GM18951 (cell line): ENCODE measurements at regions of chr3 and their contacts with region 1.

Region 1: GRCh38 chr3:8970971-8971589 is 7.8 kb upstream of the RAD18 start:
- POLR2A ChIP-seq: no peak

Region 2: DNA sequence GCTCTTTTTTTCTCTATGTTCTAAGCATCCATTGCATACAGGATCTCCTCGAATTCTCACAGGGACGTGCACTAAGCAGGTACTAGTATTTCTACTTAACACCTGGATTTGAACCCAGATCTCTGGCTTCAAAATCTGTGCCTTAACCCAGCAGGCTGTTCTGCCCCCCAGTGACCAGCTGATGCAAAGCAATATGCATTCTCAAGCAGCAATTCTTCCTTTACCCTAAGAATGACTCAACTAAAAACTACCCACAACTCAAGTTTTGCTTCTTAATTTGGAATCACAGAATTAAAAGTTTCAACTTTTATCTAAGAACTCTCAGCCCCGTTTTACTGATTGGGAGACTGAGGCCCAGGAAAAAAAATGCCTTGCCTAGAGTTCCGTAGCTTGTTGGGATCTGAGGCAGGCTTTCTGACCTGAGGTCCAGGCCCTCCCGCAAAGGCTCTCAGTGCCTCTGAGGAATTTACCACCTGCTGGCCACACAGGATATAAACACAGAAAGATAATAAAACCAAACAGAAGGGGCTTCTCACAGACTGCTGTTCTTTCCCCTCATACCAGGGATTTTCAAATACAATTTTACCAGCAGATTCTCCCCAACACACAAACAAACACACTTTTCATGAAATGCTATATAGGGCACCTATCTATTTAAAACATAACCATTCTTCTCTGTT is 107.6 kb after region 1 on chr3:
- in situ Hi-C with region 1: loop called (anchors 10 kb)
- POLR2A ChIP-seq: no peak

Region 3: GRCh38 chr3:9302425-9303181 is 331.5 kb after region 1 on chr3:
- in situ Hi-C with region 1: loop called (anchors 5 kb)
- POLR2A ChIP-seq: no peak